IMR-90 (cell line): ENCODE measurements at regions of chr9 and their contacts with region 1.

Region 1: GRCh38 chr9:7394007-7394774 is 405.4 kb downstream of the DMAC1 start:
- DNase-seq: no peak
- ATAC-seq: no peak
- H3K4me3 ChIP-seq: no peak overlapping the region
- H3K27ac ChIP-seq: no peak overlapping the region
- H3K4me1 ChIP-seq: no peaks in the 10 kb centered on the region
- H3K27me3 ChIP-seq: no peaks in the 10 kb centered on the region
- CTCF ChIP-seq: no peak
- POLR2A ChIP-seq: no peak
- RAD21 ChIP-seq: no peak

Region 2: DNA sequence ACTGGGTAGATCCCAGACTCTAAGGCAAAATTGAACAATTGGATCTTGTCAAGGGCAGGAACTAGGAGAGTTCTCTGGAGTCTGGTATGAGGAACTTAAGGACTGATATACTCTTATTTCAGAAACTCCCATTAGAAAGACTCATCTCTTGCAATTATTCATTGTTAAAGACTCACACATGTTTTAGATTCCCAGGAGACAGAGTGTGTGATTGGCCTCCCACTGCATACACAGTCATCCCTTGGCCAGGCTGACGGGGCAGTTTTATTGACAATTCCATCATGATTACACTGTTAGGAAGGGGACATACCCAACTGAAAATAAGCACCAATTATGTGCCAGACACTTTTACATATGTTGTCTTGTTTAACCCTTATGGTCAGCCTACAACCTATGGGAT is 58.2 kb after region 1 on chr9:
- CTCF ChIA-PET with region 1: no interaction called
- POLR2A ChIA-PET with region 1: no interaction called
- dilution Hi-C with region 1: no loop called
- in situ Hi-C with region 1: no loop called
- intact Hi-C with region 1: loop called (anchors 10 kb)
- DNase-seq: peak; percentile 81
- ATAC-seq: peak; percentile 95
- H3K4me3 ChIP-seq: no peak overlapping the region
- H3K27ac ChIP-seq: no peak overlapping the region
- H3K4me1 ChIP-seq: peaks cover 4% of the 10 kb centered on the region; the same call in 1 of the 2 replicates
- H3K27me3 ChIP-seq: no peaks in the 10 kb centered on the region
- CTCF ChIP-seq: no peak
- POLR2A ChIP-seq: no peak
- RAD21 ChIP-seq: no peak